ENCODE measurements at regions of chr10 and their contacts with region 1.

Region 1: DNA sequence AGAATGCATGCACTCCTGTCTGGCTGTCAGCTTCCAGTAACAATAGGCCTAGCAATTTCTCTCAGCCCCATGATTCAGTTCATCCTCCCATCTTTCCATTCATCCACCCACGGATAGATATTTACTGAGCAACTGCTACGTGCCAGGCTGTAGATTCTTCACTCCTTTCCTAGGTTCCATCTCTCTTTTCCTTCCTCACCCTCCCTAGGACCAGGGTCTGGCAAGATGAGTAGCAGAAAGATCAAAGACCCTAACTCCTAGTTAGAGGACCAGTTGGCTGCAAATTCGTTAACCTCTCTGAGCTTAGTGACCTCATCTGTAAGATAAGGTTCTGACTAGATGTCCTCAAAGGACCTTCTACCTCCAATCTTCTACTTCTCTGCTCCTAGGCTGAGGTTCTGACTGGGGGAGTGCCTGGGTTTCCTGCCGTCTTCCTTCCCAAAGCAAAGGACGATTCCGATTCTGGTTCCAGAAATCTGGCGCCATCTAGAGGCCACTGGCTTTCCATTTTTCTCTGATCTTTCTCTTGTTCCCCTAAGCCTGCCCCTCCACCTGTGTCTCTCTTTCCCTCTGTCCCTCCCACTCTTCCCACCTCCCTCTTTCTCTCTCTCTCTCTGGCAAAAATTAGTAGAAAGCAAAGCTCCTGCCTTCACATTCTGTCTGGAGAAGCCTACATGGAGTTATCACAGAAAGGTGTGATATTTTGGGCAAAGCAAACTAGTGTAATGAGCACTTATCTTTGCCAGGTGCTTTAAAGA is 26.2 kb downstream of the TBATA start:
- DNase-seq: peak; percentile 42 to 84 (median 72)
- ATAC-seq: peak; percentile 62
- H3K4me3 ChIP-seq: no peak overlapping the region
- H3K4me3 Mint-ChIP-seq: no peak overlapping the region
- H3K27ac ChIP-seq: no peak overlapping the region
- H3K27ac Mint-ChIP-seq: no peak overlapping the region
- H3K4me1 ChIP-seq: no peaks in the 10 kb centered on the region
- H3K4me1 Mint-ChIP-seq: peaks cover 7% of the 10 kb centered on the region
- H3K27me3 ChIP-seq: no peaks in the 10 kb centered on the region
- H3K27me3 Mint-ChIP-seq: no peaks in the 10 kb centered on the region
- CTCF ChIP-seq: peak; percentile 83

Region 2: DNA sequence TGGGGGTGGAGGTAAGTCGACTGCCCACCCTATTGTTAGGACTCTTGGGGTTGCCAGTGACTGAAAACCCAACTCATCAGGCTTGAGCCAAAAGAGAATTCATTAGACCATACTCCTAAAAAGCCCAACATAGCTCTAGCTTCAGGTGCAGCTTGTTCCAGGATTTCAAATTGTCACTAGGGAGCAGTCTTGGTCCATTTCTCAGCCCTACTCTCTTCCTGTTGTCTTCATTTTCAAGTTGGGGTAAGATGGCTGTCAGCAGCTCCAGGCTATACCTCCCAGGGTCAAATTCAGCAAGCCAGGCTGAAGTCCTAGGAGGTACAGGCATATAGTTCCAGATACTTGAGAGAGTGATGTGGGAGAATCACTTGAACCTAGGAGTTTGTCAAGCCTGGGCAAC is 972.1 kb before region 1 on chr10:
- CTCF ChIA-PET with region 1: no interaction called
- POLR2A ChIA-PET with region 1: no interaction called
- intact Hi-C with region 1: no loop called
- DNase-seq: peak in 2 of 9 experiments; percentile 23 to 37
- ATAC-seq: no peak
- H3K4me3 ChIP-seq: no peak overlapping the region
- H3K4me3 Mint-ChIP-seq: no peak overlapping the region
- H3K27ac ChIP-seq: no peak overlapping the region
- H3K27ac Mint-ChIP-seq: no peak overlapping the region
- H3K4me1 ChIP-seq: no peaks in the 10 kb centered on the region
- H3K4me1 Mint-ChIP-seq: no peaks in the 10 kb centered on the region
- H3K27me3 ChIP-seq: no peaks in the 10 kb centered on the region
- H3K27me3 Mint-ChIP-seq: peaks cover 9% of the 10 kb centered on the region
- CTCF ChIP-seq: no peak

Region 3: DNA sequence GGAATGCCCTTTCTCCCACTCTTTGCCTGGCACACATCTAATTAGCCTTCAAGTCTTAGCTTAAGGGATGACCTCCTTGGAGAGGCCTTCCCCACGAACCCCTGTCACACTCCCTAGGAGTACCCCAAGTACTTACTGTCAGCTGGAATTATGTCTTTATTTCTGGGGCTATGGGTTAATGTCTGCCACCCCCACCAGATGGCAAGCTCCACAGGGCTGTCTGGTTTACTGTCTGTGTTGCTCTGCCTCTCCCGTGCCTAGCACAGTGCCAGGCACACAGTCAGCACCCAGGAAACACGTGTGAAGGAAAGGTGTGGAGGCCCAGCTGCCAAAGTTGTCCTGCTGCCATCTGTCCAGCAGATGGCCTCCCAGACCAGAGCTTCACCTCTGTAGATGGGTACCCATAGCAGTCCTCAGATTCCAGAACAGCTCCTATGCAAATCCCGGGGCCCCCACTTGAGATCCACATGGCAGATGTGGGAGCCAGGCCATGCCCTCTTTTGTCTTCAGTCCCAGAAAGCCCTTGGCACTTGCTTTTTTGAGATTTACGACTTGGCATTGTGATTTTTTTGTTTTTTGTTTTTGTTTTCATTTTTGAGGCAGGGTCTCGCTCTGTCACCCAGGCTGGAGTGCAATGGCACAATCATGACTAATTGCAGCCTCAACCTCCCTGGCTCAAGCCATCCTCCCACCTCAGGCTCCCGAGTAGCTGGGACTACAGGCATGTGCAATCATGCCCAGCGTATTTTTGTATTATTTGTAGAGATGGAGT is 297.5 kb before region 1 on chr10:
- CTCF ChIA-PET with region 1: interaction called, 10 read pairs
- POLR2A ChIA-PET with region 1: no interaction called
- intact Hi-C with region 1: loop called (anchors 1 to 2 kb)
- DNase-seq: peak in 8 of 9 experiments; percentile 30 to 67 (median 47)
- ATAC-seq: peak; percentile 70
- H3K4me3 ChIP-seq: no peak overlapping the region
- H3K4me3 Mint-ChIP-seq: no peak overlapping the region
- H3K27ac ChIP-seq: no peak overlapping the region
- H3K27ac Mint-ChIP-seq: no peak overlapping the region
- H3K4me1 ChIP-seq: peaks cover 11% of the 10 kb centered on the region
- H3K4me1 Mint-ChIP-seq: peaks cover 4% of the 10 kb centered on the region
- H3K27me3 ChIP-seq: peaks cover 3 to 15% of the 10 kb centered on the region in 2 experiments
- H3K27me3 Mint-ChIP-seq: peaks cover 37% of the 10 kb centered on the region
- CTCF ChIP-seq: peak; percentile 76

Region 4: GRCh38 chr10:70619271-70620019 is 139.5 kb before region 1 on chr10:
- CTCF ChIA-PET with region 1: interaction called, 7 read pairs
- POLR2A ChIA-PET with region 1: no interaction called
- intact Hi-C with region 1: loop called in 1 of 2 experiments (anchors 5 kb)
- DNase-seq: peak in 2 of 9 experiments; percentile 30 to 44
- ATAC-seq: no peak
- H3K4me3 ChIP-seq: no peak overlapping the region
- H3K4me3 Mint-ChIP-seq: no peak overlapping the region
- H3K27ac ChIP-seq: no peak overlapping the region
- H3K27ac Mint-ChIP-seq: peak overlapping the region; percentile 25
- H3K4me1 ChIP-seq: peaks cover 21% of the 10 kb centered on the region
- H3K4me1 Mint-ChIP-seq: peaks cover 41% of the 10 kb centered on the region
- H3K27me3 ChIP-seq: no peaks in the 10 kb centered on the region
- H3K27me3 Mint-ChIP-seq: no peaks in the 10 kb centered on the region
- CTCF ChIP-seq: no peak

Region 5: DNA sequence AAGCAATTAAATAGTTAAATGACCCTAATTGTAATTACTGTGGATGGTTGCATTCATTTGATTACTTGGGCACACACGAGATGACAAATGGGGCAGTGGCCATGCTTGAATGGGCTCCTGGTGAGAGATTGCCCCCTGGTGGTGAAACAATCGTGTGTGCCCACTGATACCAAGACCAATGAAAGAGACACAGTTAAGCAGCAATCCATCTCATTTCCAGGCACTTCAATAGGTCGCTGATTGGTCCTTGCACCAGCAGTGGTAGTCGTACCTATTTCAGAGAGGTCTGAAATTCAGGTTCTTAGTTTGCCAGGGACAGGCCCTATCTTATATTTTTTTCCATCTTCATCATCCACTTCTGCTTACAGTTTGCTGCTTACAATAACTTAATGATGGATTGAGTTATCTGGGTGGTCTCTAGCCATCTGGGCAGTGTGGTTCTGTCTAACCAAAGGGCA is 121.2 kb after region 1 on chr10:
- CTCF ChIA-PET with region 1: interaction called, 15 read pairs
- POLR2A ChIA-PET with region 1: no interaction called
- intact Hi-C with region 1: loop called in 1 of 2 experiments (anchors 2 kb)
- DNase-seq: peak; percentile 45 to 87 (median 76)
- ATAC-seq: peak; percentile 92
- H3K4me3 ChIP-seq: no peak overlapping the region
- H3K4me3 Mint-ChIP-seq: no peak overlapping the region
- H3K27ac ChIP-seq: no peak overlapping the region
- H3K27ac Mint-ChIP-seq: no peak overlapping the region
- H3K4me1 ChIP-seq: no peaks in the 10 kb centered on the region
- H3K4me1 Mint-ChIP-seq: peaks cover 2% of the 10 kb centered on the region
- H3K27me3 ChIP-seq: no peaks in the 10 kb centered on the region
- H3K27me3 Mint-ChIP-seq: no peaks in the 10 kb centered on the region
- CTCF ChIP-seq: peak; percentile 84